Posterior cingulate gyrus (tissue), 11 donors: ENCODE measurements at regions of chr3 and their contacts with region 1.

Region 1: DNA sequence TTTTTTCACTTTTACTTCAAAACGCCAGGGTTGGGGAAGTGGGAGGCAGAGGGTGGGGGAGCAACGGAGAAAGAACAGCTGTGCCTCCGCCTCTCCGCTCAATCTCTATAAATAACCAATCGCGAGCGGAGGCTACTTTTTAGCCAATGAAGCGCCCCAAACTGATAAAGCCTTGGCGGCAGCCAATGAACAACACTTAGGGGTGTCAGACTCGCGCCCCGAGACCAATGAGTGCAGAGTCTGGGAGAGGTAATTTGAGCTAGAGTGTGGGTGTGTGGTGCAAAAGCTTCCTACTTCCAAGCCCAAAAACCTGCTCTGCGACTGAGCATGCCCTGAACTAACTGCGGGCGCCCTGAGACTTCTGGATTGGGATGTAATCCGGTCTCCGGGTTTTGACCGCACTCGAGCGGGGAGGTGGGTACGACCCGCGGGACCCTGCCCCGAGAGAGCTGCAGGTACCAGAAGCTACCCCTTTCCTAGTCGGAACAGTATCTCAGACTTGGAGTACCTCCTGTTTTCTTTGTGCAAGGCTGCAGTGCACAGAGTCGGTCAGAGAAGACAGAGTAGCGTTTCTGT is 800 bp upstream of the RAP2B start:
- DNase-seq: peak; percentile 66 to 98 (median 88)

Region 2: GRCh38 chr3:153768561-153769469 is 607.6 kb after region 1 on chr3:
- intact Hi-C with region 1: loop called (anchors 10 kb)
- DNase-seq: peak in 3 of 10 donors; percentile 19 to 78 (median 23)